ENCODE measurements at regions of chr17 and their contacts with region 1.

Region 1: DNA sequence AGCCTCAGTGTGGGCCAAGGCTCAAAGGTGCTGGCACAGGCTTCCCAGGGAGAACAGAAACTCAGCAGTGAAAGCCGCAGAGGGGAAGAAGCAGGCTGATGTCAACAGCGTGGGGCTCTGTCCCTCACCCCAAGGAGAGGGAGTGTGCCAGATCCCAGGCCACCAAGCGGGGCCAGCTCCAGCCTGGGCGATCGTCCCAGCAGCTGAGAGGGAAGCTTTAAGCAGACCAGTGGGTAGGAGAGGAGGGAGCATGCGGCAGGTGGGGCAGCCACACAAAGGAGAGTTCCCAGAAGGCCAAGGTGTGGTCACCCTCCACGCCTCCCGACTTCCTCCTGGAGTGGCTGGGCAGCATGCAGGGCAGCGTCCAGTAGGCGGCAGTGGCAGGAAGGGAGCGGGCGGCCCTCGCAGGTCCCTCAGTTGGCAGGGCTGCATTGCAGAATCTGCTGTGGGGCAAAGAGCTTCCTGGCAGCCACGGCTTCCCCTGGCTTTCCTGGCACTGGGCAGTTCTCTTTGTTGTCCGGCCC is 6.0 kb downstream of the SYNGR2 start:
- DNase-seq: peak; percentile 87
- H3K4me3 Mint-ChIP-seq: no peak overlapping the region
- H3K27ac Mint-ChIP-seq: peak overlapping the region; percentile 87
- H3K4me1 Mint-ChIP-seq: peaks cover 46% of the 10 kb centered on the region
- H3K27me3 Mint-ChIP-seq: no peaks in the 10 kb centered on the region
- CTCF ChIP-seq: peak; percentile 30

Region 2: DNA sequence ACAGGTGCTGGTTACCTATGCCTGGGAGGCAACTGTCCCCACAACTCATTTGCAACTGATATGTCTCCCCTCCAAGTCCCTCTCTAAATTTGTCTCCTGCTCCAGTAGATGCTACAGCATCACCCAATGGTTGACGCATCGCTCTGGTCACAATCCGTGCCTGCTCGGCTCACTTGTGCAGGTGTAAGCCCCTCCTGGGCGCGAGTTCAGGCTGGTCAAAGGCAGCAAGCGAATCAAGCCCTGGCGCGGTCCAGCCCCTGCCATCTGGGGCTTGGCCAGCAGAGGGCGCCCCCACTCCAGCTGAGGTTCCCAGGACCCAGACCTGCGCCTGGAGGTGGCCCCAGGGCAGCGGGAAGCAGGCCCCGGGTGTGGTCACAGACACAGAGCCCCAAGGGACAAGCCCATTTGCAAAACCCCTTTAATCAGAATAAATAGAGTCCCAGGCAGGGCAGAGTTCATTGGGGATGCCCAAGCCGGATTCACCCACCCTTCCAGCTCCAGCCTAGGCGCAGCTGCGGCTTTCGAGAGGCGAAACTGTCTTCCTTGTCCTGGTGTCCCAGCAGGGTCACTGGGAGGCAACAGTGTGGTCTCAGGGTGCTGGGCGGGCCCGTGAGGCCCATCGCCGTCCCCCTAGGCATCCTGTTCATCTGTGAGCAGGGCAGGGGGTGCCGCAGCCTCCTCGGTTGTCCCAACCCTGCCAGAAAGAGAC is 61.7 kb before region 1 on chr17:
- CTCF ChIA-PET with region 1: interaction called, 3 read pairs
- intact Hi-C with region 1: loop called (anchors 2 kb)
- DNase-seq: peak; percentile 89
- H3K4me3 Mint-ChIP-seq: no peak overlapping the region
- H3K27ac Mint-ChIP-seq: peak overlapping the region; percentile 2
- H3K4me1 Mint-ChIP-seq: peaks cover 8% of the 10 kb centered on the region
- H3K27me3 Mint-ChIP-seq: no peaks in the 10 kb centered on the region
- CTCF ChIP-seq: peak; percentile 97

Measured in Calu3 (cell line).